ENCODE measurements at regions of chr3 and their contacts with region 1.

Region 1: DNA sequence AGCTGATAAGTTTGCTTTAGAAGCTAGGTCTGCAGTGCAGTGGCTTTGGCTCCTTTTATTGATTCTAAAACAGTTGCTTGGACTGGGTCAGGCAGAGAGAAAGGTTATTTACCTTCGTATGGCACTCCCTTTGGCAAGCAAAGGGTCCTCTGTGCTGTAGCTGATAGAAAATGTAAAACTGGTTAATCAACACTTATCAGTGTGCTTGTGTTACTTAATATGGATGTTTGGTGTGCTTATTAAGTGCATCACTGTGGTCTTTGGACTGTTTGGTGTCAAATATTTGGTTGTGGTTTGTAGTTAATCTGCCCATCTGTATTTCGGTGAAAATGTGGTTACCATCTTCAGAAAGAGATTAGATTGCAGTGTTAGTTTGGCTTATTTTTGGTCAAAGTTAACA is 16.0 kb downstream of the UBE2E2 start:
- DNase-seq: no peak
- ATAC-seq: no peak; the same call in 1 of the 2 replicates
- H3K4me3 Mint-ChIP-seq: no peak overlapping the region
- H3K27ac Mint-ChIP-seq: no peak overlapping the region
- H3K4me1 Mint-ChIP-seq: peaks cover 15% of the 10 kb centered on the region
- H3K27me3 Mint-ChIP-seq: no peaks in the 10 kb centered on the region
- CTCF ChIP-seq: no peak

Region 2: GRCh38 chr3:23203708-23204330 is 15.3 kb before region 1 on chr3:
- CTCF ChIA-PET with region 1: no interaction called
- POLR2A ChIA-PET with region 1: no interaction called
- DNase-seq: peak; percentile 31
- ATAC-seq: peak; percentile 2; the same call in 1 of the 2 replicates
- H3K4me3 Mint-ChIP-seq: peak overlapping the region; percentile 91
- H3K27ac Mint-ChIP-seq: peak overlapping the region; percentile 96
- H3K4me1 Mint-ChIP-seq: peaks cover 42% of the 10 kb centered on the region
- H3K27me3 Mint-ChIP-seq: peaks cover 26% of the 10 kb centered on the region
- CTCF ChIP-seq: no peak

Region 3: GRCh38 chr3:23232016-23232415 is 12.9 kb after region 1 on chr3:
- CTCF ChIA-PET with region 1: no interaction called
- POLR2A ChIA-PET with region 1: no interaction called
- DNase-seq: no peak
- ATAC-seq: no peak
- H3K4me3 Mint-ChIP-seq: no peak overlapping the region
- H3K27ac Mint-ChIP-seq: no peak overlapping the region
- H3K4me1 Mint-ChIP-seq: peaks cover 30% of the 10 kb centered on the region
- H3K27me3 Mint-ChIP-seq: no peaks in the 10 kb centered on the region
- CTCF ChIP-seq: no peak

Region 4: DNA sequence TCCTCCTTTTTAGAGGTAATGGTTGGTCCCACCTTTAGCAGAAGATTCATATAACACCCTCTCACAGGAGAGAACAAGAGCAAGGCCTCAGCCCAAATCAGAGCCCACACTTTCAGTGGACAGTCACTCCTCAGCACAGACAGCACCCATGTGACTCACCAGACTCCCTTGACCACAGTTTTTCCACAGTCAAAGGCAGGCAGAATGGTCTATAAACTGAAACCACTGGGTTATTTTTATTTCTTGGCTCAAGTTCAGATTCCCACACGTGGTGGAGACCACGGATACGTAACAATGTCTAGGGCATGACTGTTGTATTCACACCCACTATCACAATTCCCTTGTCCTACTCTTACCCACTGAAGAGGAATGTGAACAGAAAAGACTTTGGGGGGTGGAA is 348.8 kb after region 1 on chr3:
- CTCF ChIA-PET with region 1: no interaction called
- POLR2A ChIA-PET with region 1: interaction called, 10 read pairs
- DNase-seq: no peak
- ATAC-seq: no peak
- H3K4me3 Mint-ChIP-seq: no peak overlapping the region
- H3K27ac Mint-ChIP-seq: no peak overlapping the region
- H3K4me1 Mint-ChIP-seq: peaks cover 14% of the 10 kb centered on the region
- H3K27me3 Mint-ChIP-seq: no peaks in the 10 kb centered on the region
- CTCF ChIP-seq: no peak